ENCODE measurements at regions of chr20 and their contacts with region 1.

Region 1: GRCh38 chr20:47411161-47411560 is 54.7 kb upstream of the ZMYND8 start:
- DNase-seq: no peak
- ATAC-seq: no peak
- H3K4me3 ChIP-seq: peak overlapping the region; percentile 64
- H3K27ac ChIP-seq: peak overlapping the region; percentile 91
- H3K4me1 ChIP-seq: peaks cover 55% of the 10 kb centered on the region
- H3K27me3 ChIP-seq: no peaks in the 10 kb centered on the region
- CTCF ChIP-seq: no peak
- EP300 ChIP-seq: no peak
- POLR2A ChIP-seq: no peak
- RAD21 ChIP-seq: no peak

Region 2: DNA sequence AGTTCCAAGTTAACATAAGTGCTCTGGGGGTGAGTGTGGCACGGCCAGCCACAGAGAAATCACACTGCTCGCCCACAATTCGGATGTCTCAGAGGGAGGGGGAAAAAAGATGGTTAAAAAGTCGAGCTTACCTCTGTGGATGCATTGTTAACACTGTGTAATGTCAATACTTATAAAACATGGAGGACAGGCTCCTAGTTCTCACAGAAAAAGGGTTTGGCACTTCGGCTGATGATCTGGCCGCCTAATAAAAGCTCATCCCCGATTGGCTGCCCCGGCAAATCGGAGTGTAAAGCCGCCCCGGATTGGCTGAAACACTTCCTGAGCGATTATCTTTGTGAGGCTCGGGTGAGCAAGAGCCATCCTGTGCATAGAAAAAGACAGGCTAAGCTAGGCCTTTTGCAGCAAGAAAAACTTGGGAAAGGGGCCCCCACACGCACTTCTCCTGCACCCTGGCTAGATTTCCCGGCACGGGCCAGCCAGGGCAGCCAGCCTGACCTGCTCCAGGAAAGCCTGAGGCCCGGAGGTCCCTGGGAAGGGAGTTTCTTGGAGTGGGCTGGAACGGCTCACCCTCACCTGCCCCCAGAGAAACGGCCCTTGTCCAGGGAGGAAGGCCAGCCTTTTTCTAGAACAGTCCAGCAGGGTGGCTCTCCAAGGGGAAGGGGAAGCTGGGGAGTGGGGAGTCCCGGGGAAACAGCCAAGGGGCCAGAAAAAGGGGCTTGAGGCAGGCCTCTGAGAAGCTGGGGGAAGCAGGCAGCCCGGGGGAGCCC is 54.5 kb before region 1 on chr20 and contains the start of gene ZMYND8:
- CTCF ChIA-PET with region 1: interaction called, 5 read pairs
- POLR2A ChIA-PET with region 1: interaction called, 29 read pairs
- RAD21 ChIA-PET with region 1: interaction called, 13 read pairs
- SMC1A ChIA-PET with region 1: interaction called, 51 read pairs
- in situ Hi-C with region 1: no loop called
- intact Hi-C with region 1: no loop called
- DNase-seq: peak; percentile 95
- ATAC-seq: peak; percentile 73
- H3K4me3 ChIP-seq: peak within 1 kb of the TSS; percentile 77
- H3K27ac ChIP-seq: peak within 1 kb of the TSS; percentile 99
- H3K4me1 ChIP-seq: peaks cover 46% of the 10 kb centered on the region
- H3K27me3 ChIP-seq: no peaks in the 10 kb centered on the region
- CTCF ChIP-seq: no peak
- EP300 ChIP-seq: no peak
- POLR2A ChIP-seq: no peak
- RAD21 ChIP-seq: no peak
- polyA plus RNA-seq, gene ZMYND8: 12.9 to 18.4 TPM

Region 3: DNA sequence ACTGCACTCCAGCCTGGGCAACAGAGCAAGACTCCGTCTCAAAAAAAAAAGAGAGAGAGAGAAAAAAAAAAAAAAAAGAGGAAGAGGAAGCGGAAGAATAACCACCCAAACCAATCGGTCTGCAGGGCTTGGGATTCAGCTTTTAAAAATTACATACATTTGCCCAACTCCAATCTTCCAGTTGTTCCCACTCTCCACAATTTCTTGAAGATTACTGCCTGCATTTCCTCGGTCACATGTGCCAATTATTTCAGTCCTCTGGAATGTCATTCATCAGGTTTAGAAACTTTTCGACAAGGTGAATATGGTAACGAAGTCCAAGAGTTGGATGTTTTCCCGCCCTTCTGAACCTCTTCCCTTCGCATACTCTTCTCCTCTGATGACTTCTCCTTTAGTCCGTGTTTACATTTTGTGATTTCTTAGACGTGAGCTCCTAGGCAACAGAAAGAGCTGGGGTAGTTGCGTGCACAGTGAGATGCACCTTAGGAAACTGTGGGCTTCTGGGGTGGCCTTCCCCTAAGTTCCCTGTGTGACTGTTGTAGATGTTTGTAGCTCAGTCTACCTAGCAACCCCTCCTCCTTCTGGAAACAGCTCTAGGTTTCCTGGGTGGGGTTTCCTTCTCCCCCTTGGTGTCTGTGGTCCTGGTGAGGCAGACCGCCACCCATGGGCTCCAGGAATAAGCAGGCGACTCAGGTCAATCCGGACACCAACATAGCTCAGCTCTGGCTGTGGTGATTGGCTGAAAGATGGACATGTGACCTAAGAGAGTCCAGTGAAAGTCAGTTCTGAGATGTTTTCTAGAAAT is 27.6 kb after region 1 on chr20:
- CTCF ChIA-PET with region 1: interaction called, 8 read pairs
- POLR2A ChIA-PET with region 1: interaction called, 6 read pairs
- RAD21 ChIA-PET with region 1: interaction called, 17 read pairs
- SMC1A ChIA-PET with region 1: interaction called, 17 read pairs
- in situ Hi-C with region 1: no loop called
- intact Hi-C with region 1: loop called (anchors 2 kb)
- DNase-seq: peak; percentile 75
- ATAC-seq: peak; percentile 75
- H3K4me3 ChIP-seq: peak overlapping the region; percentile 39; the same call in 1 of the 2 replicates
- H3K27ac ChIP-seq: peak overlapping the region; percentile 91
- H3K4me1 ChIP-seq: peaks cover 19% of the 10 kb centered on the region
- H3K27me3 ChIP-seq: no peaks in the 10 kb centered on the region
- CTCF ChIP-seq: no peak
- EP300 ChIP-seq: peak; percentile 32 to 78; a peak in 3 of 4 replicates
- POLR2A ChIP-seq: no peak; the same call in 1 of the 2 replicates
- RAD21 ChIP-seq: no peak

Region 4: DNA sequence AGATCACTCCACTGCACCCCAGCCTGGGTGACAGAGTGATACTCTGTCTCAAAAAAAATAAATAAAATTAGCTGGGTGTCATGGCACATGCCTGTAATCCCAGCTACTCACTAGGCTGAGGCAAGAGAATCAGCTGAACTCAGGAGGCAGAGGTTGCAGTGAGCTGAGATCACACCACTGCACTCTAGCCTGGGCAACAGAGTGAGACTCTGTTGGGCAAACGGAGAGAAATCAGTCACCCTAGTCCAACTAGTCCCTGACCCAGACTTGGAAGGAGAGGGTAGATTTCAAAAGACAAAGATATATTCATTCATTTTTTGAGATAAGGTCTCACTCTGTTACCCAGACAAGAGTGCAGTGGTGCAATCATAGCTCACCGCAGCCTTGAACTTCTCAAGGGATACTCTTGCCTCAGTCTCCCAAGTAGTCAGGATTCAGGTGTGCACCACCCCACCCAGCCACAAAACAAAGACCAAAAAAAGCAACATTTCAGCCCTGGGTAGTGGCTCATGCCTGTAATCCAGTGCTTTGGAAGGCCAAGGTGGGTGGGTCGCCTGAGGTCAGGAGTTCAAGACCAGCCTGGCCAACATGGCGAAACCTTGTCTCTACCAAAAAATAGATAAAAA is 64.4 kb after region 1 on chr20:
- CTCF ChIA-PET with region 1: interaction called, 11 read pairs
- POLR2A ChIA-PET with region 1: interaction called, 22 read pairs
- RAD21 ChIA-PET with region 1: interaction called, 52 read pairs
- SMC1A ChIA-PET with region 1: interaction called, 142 read pairs
- in situ Hi-C with region 1: no loop called
- intact Hi-C with region 1: no loop called
- DNase-seq: no peak
- ATAC-seq: no peak
- H3K4me3 ChIP-seq: no peak overlapping the region
- H3K27ac ChIP-seq: no peak overlapping the region
- H3K4me1 ChIP-seq: peaks cover 30% of the 10 kb centered on the region
- H3K27me3 ChIP-seq: no peaks in the 10 kb centered on the region
- CTCF ChIP-seq: no peak
- EP300 ChIP-seq: no peak
- POLR2A ChIP-seq: no peak
- RAD21 ChIP-seq: no peak

Region 5: DNA sequence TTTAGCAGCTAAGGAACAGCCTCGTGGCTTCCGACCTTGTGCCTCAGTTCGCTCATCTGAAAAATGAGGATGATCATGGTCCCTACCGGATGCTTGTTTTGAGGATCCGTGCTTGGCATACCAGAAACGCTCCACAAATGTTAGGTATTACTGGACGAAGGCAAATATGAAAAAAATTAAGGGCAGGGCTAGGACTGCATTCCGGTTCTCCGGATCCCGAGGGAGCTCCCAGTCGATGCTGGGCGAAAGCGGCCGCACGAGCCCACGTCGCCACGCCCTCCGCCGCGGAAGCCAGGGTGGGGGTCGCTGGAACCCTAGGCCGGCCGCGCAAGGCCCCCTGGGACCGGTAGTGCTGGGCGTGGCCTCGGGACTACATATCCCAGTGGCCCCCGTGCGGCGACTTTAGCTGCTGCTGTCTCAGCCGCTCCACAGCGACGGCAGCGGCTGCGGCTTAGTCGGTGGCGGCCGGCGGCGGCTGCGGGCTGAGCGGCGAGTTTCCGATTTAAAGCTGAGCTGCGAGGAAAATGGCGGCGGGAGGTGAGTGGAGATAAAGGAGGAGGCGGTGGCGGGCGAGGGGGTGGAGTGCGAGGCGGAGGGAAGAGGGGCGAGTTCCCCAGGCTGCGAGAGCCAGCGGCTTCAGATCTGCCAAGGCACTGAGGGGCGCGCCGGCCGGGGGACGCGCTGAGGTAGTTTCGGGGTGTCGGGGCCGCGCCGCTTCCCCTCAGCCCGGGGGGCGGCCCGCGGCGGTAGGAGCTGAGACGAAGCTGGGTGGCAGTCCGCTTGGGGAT is 90.5 kb after region 1 on chr20 and contains the start of gene NCOA3:
- CTCF ChIA-PET with region 1: interaction called, 31 read pairs
- POLR2A ChIA-PET with region 1: interaction called, 123 read pairs
- RAD21 ChIA-PET with region 1: interaction called, 100 read pairs
- SMC1A ChIA-PET with region 1: interaction called, 86 read pairs
- in situ Hi-C with region 1: no loop called
- intact Hi-C with region 1: loop called (anchors 5 kb)
- DNase-seq: no peak
- ATAC-seq: peak; percentile 82
- H3K4me3 ChIP-seq: peak within 1 kb of the TSS; percentile 94
- H3K27ac ChIP-seq: peak within 1 kb of the TSS; percentile 92
- H3K4me1 ChIP-seq: peaks cover 30% of the 10 kb centered on the region
- H3K27me3 ChIP-seq: no peaks in the 10 kb centered on the region
- CTCF ChIP-seq: peak; percentile 15 to 43 (median 20); a peak in 3 of 6 replicates
- EP300 ChIP-seq: peak in 1 of 2 experiments; percentile 67; a peak in 2 of 4 replicates
- POLR2A ChIP-seq: peak; percentile 98
- RAD21 ChIP-seq: peak; percentile 24; the same call in 1 of the 2 replicates
- polyA plus RNA-seq, gene NCOA3: 16.9 to 18.0 TPM

Region 6: DNA sequence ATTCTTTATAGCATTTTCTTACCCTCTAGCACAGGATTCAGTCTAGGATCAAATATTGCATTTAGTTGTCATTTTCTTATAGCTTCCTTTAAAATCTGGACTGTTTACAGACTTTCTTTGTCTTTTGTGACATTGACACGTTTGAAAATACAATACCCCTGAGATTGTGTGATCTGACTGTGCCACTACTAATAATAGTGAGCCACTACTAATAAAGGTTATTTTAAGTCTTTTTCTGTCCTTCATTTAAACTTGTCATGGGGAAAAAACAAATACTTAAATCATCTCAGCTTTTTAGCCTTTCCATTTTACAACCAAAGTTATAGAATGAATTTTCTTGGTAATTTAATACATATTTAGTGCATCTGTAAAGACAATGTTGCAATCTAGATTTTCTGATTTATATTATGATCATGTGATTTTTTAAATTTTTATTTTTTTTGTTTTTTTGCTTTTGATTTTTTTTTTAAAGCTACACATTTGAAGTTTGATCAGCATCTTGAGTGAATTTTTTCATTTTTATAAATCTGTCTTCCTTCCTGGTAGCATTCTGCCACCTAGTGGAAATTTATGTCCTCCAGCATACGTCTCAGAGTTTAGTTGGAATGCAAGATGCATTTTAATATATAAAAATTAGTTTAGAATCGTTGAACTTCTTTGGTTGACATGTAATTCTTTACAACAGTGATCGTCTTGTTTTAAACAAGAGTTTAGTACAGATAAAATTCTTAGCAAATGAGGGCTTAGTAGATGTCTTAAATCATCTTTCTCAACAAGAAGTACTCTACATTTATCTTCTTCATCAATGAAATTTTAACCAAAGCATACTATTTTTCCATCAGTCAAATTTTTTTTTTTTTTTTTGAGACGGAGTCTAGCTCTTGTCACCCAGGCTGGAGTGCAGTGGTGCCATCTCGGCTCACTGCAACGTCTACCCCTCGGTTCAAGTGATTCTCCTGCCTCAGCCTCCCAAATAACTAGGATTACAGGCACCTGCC is 209.9 kb after region 1 on chr20:
- CTCF ChIA-PET with region 1: interaction called, 5 read pairs
- POLR2A ChIA-PET with region 1: interaction called, 3 read pairs
- RAD21 ChIA-PET with region 1: interaction called, 37 read pairs
- SMC1A ChIA-PET with region 1: interaction called, 13 read pairs
- in situ Hi-C with region 1: no loop called
- intact Hi-C with region 1: loop called (anchors 5 kb)
- DNase-seq: peak; percentile 32
- ATAC-seq: peak; percentile 79
- H3K4me3 ChIP-seq: no peak overlapping the region
- H3K27ac ChIP-seq: peak overlapping the region; percentile 33
- H3K4me1 ChIP-seq: peaks cover 10% of the 10 kb centered on the region
- H3K27me3 ChIP-seq: no peaks in the 10 kb centered on the region
- CTCF ChIP-seq: peak; percentile 59 to 68 (median 60)
- EP300 ChIP-seq: no peak
- POLR2A ChIP-seq: no peak
- RAD21 ChIP-seq: peak; percentile 89

Measured in GM12878 (cell line).